HepG2 (cell line): ENCODE measurements at regions of chr9 and their contacts with region 1.

Region 1: DNA sequence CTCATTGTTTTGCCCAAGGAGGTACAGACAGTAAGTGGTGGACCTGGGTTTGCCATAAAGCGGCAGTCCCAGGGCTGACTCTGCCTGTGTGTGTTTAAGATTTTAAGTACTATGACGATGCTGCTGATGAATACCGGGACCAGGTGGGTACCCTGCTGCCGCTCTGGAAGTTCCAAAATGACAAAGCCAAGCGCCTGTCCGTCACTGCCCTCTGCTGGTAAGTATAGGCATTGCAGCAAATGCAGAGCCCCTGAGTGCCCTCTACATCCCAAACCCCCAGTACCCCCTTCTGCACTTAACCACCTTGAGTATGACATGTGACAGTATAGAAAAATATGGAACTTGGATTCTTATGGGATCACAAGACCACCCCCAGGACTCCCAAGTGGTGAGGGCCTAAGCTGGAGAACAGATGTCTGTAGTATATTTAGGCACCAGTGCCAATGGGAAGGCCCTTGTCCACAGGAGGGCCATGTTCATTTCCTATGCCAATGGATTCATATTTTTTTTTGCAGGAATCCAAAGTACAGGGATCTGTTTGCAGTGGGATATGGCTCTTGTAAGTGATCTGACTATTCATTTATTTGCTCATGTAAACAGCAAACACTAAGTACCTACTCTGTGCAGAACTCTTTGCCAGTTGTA is 22.0 kb downstream of the ENHO start:
- DNase-seq: peak; percentile 18
- ATAC-seq: peak; percentile 60
- H3K4me3 ChIP-seq: no peak overlapping the region
- H3K27ac ChIP-seq: no peak overlapping the region
- H3K4me1 ChIP-seq: peaks cover 23% of the 10 kb centered on the region
- H3K27me3 ChIP-seq: peaks cover 0 to 17% of the 10 kb centered on the region in 2 experiments; a peak in 2 of 5 replicates
- CTCF ChIP-seq: peak; percentile 82
- EP300 ChIP-seq: no peak
- POLR2A ChIP-seq: no peak
- RAD21 ChIP-seq: peak; percentile 60

Region 2: DNA sequence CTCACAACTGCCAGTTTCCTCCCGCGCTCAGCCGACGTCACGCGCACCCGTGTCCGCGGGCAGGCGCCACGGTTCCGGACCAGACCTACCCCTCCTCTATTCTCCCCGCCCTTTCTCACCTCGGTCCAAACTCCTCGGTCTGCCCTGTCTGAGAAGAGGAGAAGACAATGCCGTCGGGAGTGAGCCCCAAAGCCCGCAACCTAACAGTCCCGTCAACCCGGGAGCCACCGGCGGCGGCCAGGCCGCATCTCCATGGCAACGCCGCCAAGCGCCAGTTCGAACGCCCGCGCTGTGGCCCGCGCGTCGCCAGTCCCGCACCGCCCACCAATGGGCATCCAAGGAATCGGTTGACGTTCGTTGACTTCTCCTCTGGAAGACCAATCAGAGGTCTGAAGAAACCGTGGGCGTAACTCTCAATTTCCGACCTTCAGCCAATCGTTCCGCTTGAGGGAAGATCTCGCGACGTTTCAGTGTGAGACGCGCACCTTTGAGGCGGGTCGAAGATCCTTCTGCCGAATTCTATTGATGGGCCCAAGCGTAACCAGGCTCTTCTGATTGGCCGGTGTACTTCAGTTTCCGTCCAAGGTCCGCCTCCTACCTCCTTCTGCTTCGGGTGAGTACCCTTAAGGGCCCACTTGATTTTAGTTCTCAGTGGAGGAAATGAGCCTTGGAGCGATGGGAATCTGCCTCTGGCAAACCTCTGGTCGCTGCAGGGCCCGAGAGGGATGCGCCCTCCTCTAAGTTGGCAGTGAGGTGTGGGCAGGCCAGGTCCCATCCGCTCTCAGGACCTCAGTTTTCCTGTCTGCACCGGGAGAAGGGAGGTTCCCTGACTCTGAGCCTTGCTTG is 171.5 kb before region 1 on chr9 and contains the starts of genes KIF24 and NUDT2:
- CTCF ChIA-PET with region 1: interaction called, 9 read pairs
- POLR2A ChIA-PET with region 1: interaction called, 10 read pairs
- in situ Hi-C with region 1: no loop called
- intact Hi-C with region 1: loop called (anchors 10 kb)
- DNase-seq: peak; percentile 100
- ATAC-seq: peak; percentile 96
- H3K4me3 ChIP-seq: peak within 1 kb of the TSS; percentile 83 to 94 (median 89)
- H3K27ac ChIP-seq: peak within 1 kb of the TSS; percentile 89
- H3K4me1 ChIP-seq: peaks cover 50% of the 10 kb centered on the region
- H3K27me3 ChIP-seq: no peaks in the 10 kb centered on the region; a peak in 1 of 5 replicates
- CTCF ChIP-seq: 0 out of 2 replicates have a peak, but pooled peaks have one; percentile 11
- EP300 ChIP-seq: no peak
- POLR2A ChIP-seq: peak; percentile 88 to 94
- RAD21 ChIP-seq: no peak
- total RNA-seq, gene KIF24: 2.8 and 3.0 TPM in 2 replicates
- total RNA-seq, gene NUDT2: 19.9 and 28.0 TPM in 2 replicates

Region 3: GRCh38 chr9:34363619-34364351 is 137.0 kb before region 1 on chr9:
- CTCF ChIA-PET with region 1: no interaction called
- POLR2A ChIA-PET with region 1: no interaction called
- in situ Hi-C with region 1: no loop called
- intact Hi-C with region 1: no loop called
- DNase-seq: no peak
- ATAC-seq: no peak
- H3K4me3 ChIP-seq: no peak overlapping the region
- H3K27ac ChIP-seq: no peak overlapping the region
- H3K4me1 ChIP-seq: peaks cover 36% of the 10 kb centered on the region
- H3K27me3 ChIP-seq: no peaks in the 10 kb centered on the region
- CTCF ChIP-seq: no peak
- EP300 ChIP-seq: no peak
- POLR2A ChIP-seq: no peak
- RAD21 ChIP-seq: no peak

Region 4: GRCh38 chr9:34430843-34431437 is 69.8 kb before region 1 on chr9:
- CTCF ChIA-PET with region 1: interaction called, 28 read pairs
- POLR2A ChIA-PET with region 1: no interaction called
- in situ Hi-C with region 1: loop called (anchors 5 kb)
- intact Hi-C with region 1: no loop called
- DNase-seq: peak; percentile 25
- ATAC-seq: no peak
- H3K4me3 ChIP-seq: no peak overlapping the region
- H3K27ac ChIP-seq: no peak overlapping the region
- H3K4me1 ChIP-seq: peaks cover 22% of the 10 kb centered on the region
- H3K27me3 ChIP-seq: no peaks in the 10 kb centered on the region
- CTCF ChIP-seq: no peak
- EP300 ChIP-seq: no peak
- POLR2A ChIP-seq: no peak
- RAD21 ChIP-seq: no peak

Region 5: GRCh38 chr9:34437006-34437925 is 63.5 kb before region 1 on chr9:
- CTCF ChIA-PET with region 1: interaction called, 28 read pairs
- POLR2A ChIA-PET with region 1: no interaction called
- in situ Hi-C with region 1: loop called (anchors 5 kb)
- intact Hi-C with region 1: loop called (anchors 1 kb)
- DNase-seq: peak; percentile 68
- ATAC-seq: peak; percentile 88
- H3K4me3 ChIP-seq: no peak overlapping the region
- H3K27ac ChIP-seq: no peak overlapping the region
- H3K4me1 ChIP-seq: no peaks in the 10 kb centered on the region
- H3K27me3 ChIP-seq: no peaks in the 10 kb centered on the region
- CTCF ChIP-seq: peak; percentile 86
- EP300 ChIP-seq: no peak
- POLR2A ChIP-seq: no peak
- RAD21 ChIP-seq: peak; percentile 67; the same call in 1 of the 2 replicates

Region 6: GRCh38 chr9:34510497-34511468 is 10.0 kb after region 1 on chr9:
- CTCF ChIA-PET with region 1: no interaction called
- POLR2A ChIA-PET with region 1: interaction called, 3 read pairs
- in situ Hi-C with region 1: no loop called
- intact Hi-C with region 1: loop called (anchors 1 kb)
- DNase-seq: no peak
- ATAC-seq: no peak
- H3K4me3 ChIP-seq: no peak overlapping the region
- H3K27ac ChIP-seq: no peak overlapping the region
- H3K4me1 ChIP-seq: peaks cover 16% of the 10 kb centered on the region
- H3K27me3 ChIP-seq: peaks cover 6 to 38% of the 10 kb centered on the region in 2 experiments; a peak in 3 of 5 replicates
- CTCF ChIP-seq: no peak
- EP300 ChIP-seq: no peak
- POLR2A ChIP-seq: no peak
- RAD21 ChIP-seq: no peak

Region 7: GRCh38 chr9:34546834-34547827 is 46.4 kb after region 1 on chr9:
- CTCF ChIA-PET with region 1: interaction called, 19 read pairs
- POLR2A ChIA-PET with region 1: no interaction called
- in situ Hi-C with region 1: no loop called
- intact Hi-C with region 1: loop called (anchors 5 kb)
- DNase-seq: peak; percentile 58
- ATAC-seq: peak; percentile 76
- H3K4me3 ChIP-seq: no peak overlapping the region
- H3K27ac ChIP-seq: no peak overlapping the region
- H3K4me1 ChIP-seq: peaks cover 18% of the 10 kb centered on the region
- H3K27me3 ChIP-seq: peaks cover 0 to 17% of the 10 kb centered on the region in 2 experiments; a peak in 2 of 5 replicates
- CTCF ChIP-seq: peak; percentile 78
- EP300 ChIP-seq: no peak
- POLR2A ChIP-seq: no peak
- RAD21 ChIP-seq: peak; percentile 73